Panc1 (cell line): ENCODE measurements at regions of chr7 and their contacts with region 1.

Region 1: DNA sequence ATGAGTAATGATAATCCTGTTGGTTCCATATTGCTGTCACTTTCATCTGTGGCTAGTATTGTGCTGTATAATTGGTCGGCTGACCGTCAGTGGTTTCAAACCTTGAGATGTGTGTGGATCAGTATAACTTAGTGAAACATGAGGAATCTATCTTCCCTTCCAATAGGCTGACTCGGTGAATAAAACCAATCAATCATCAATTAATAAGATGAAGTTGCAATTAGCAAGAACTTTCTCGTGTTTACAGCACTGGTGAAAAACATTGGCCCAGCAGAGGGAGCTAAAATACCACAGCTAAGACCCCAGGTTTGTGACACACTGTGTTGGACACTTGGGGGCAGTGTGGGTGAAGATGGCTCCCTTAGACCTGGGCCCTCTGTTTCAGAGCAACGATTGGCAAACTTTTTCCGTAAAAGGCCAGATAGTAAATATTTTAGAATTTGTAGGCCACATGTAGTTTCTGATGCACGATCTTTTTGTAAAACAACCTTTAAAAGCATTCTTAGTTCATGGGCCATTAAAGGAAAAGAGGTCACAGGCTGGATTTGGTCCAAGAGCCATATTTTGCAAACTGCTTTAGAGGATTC is 47.8 kb downstream of the STRA8 start:
- DNase-seq: peak; percentile 85
- ATAC-seq: peak; percentile 97
- H3K4me3 ChIP-seq: no peak overlapping the region
- H3K27ac ChIP-seq: no peak overlapping the region
- H3K4me1 ChIP-seq: 0 out of 2 replicates have a peak, but pooled peaks cover 3% of the 10 kb centered on the region
- H3K27me3 ChIP-seq: no peaks in the 10 kb centered on the region
- CTCF ChIP-seq: peak; percentile 97

Region 2: GRCh38 chr7:135001390-135002165 is 279.9 kb before region 1 on chr7:
- CTCF ChIA-PET with region 1: no interaction called
- POLR2A ChIA-PET with region 1: no interaction called
- in situ Hi-C with region 1: no loop called
- intact Hi-C with region 1: no loop called
- DNase-seq: no peak
- ATAC-seq: no peak
- H3K4me3 ChIP-seq: no peak overlapping the region
- H3K27ac ChIP-seq: no peak overlapping the region
- H3K4me1 ChIP-seq: no peaks in the 10 kb centered on the region
- H3K27me3 ChIP-seq: no peaks in the 10 kb centered on the region
- CTCF ChIP-seq: no peak

Region 3: DNA sequence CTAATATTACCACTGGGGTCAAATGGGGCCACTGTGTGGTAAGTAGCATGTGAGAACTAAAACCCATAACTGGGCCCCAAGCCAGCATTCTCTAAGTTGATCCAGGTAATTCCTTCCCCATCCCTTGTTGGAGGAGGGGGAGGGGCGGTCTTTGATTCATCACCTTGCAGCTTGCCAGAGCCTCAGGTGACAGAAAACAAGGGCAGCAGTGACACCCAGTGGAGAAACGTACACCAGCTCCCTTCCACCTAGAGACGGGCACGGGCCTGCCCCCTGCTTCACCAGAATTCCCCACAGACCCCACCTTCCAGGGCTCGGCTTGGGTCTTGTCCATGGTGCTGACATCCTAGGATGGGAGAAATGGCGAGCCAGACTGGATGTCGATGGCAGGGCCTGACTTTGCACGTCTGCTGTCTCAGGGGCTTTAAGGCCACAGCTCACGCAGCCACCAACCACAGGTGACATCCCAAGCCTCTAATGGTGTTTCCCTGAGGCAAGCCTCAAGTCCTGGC is 54.2 kb after region 1 on chr7:
- CTCF ChIA-PET with region 1: interaction called, 22 read pairs
- POLR2A ChIA-PET with region 1: no interaction called
- in situ Hi-C with region 1: no loop called
- intact Hi-C with region 1: loop called (anchors 1 kb)
- DNase-seq: peak; percentile 25
- ATAC-seq: peak; percentile 91
- H3K4me3 ChIP-seq: no peak overlapping the region
- H3K27ac ChIP-seq: no peak overlapping the region
- H3K4me1 ChIP-seq: no peaks in the 10 kb centered on the region
- H3K27me3 ChIP-seq: no peaks in the 10 kb centered on the region
- CTCF ChIP-seq: peak; percentile 68

Region 4: GRCh38 chr7:135509903-135510602 is 228.6 kb after region 1 on chr7 and contains the start of gene CNOT4:
- CTCF ChIA-PET with region 1: no interaction called
- POLR2A ChIA-PET with region 1: no interaction called
- in situ Hi-C with region 1: no loop called
- intact Hi-C with region 1: loop called (anchors 10 kb)
- DNase-seq: peak; percentile 83
- ATAC-seq: peak; percentile 98
- H3K4me3 ChIP-seq: peak within 1 kb of the TSS; percentile 95 to 99
- H3K27ac ChIP-seq: peak within 1 kb of the TSS; percentile 91
- H3K4me1 ChIP-seq: peaks cover 14% of the 10 kb centered on the region
- H3K27me3 ChIP-seq: no peaks in the 10 kb centered on the region
- CTCF ChIP-seq: no peak
- total RNA-seq, gene CNOT4: 22.3 TPM

Region 5: GRCh38 chr7:135558337-135558767 is 276.9 kb after region 1 on chr7:
- CTCF ChIA-PET with region 1: no interaction called
- POLR2A ChIA-PET with region 1: no interaction called
- in situ Hi-C with region 1: no loop called
- intact Hi-C with region 1: loop called (anchors 5 kb)
- DNase-seq: peak; percentile 63
- ATAC-seq: peak; percentile 72
- H3K4me3 ChIP-seq: peak overlapping the region; percentile 97 to 99
- H3K27ac ChIP-seq: peak overlapping the region; percentile 97
- H3K4me1 ChIP-seq: no peaks in the 10 kb centered on the region
- H3K27me3 ChIP-seq: no peaks in the 10 kb centered on the region
- CTCF ChIP-seq: peak; percentile 80

Region 6: DNA sequence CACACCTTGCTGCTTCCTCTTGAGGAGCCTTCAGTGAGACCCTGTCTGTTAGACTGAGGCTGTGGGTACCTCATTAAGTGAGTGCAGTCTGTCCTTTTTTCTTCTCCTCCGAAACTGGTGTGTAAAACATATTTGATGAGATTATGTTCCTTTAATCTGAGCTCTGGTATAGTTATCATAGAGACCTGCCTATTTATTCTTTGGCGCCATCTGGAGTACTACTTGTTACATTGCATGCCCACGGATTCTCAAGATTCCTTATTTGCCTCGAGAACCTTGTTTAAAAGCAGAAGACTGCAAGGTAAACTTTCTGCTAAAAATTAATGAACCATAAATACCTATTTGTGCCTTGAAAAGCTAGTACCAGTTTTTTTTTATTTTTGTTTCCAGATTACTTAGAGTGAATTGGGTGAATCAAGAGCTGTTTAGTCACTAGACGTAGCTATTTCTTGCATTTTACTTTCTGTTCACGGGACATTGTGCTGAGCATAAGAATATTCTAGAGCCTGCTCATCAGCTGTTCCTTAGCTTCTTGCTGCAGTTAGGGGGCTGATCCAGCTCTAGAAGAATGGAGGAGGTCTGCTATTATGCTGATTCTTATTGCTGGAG is 363.9 kb after region 1 on chr7:
- CTCF ChIA-PET with region 1: interaction called, 5 read pairs
- POLR2A ChIA-PET with region 1: no interaction called
- in situ Hi-C with region 1: no loop called
- intact Hi-C with region 1: loop called (anchors 2 kb)
- DNase-seq: no peak
- ATAC-seq: peak; percentile 86
- H3K4me3 ChIP-seq: no peak overlapping the region
- H3K27ac ChIP-seq: no peak overlapping the region
- H3K4me1 ChIP-seq: no peaks in the 10 kb centered on the region
- H3K27me3 ChIP-seq: no peaks in the 10 kb centered on the region
- CTCF ChIP-seq: peak; percentile 79